Ascending aorta (tissue), 2 donors: ENCODE measurements at regions of chr9 and their contacts with region 1.

Region 1: DNA sequence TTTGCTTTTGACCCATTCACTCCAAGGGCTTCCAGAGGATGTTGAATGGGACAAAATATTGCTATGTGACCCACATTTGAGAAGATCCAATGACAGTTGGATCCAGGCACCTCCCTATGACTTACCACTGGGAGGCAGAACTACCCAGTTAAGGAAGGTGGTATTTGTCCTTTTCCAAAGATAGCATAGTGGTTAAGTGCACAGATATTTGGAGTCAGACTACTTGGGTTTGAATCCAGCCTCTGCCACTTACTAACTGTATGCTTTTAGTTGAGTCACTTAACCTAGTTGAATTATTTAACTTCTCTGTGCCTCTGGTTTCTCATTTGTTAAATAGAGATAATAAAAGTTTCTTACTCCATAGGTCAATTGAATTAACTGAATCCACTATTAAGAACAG is 74.5 kb upstream of the PALM2AKAP2 start:
- DNase-seq: no peak
- H3K4me3 ChIP-seq: no peak overlapping the region
- H3K27ac ChIP-seq: peak overlapping the region in 1 of 2 donors; percentile 55
- H3K4me1 ChIP-seq: peaks cover 15 to 27% of the 10 kb centered on the region in 2 donors
- H3K27me3 ChIP-seq: no peaks in the 10 kb centered on the region
- CTCF ChIP-seq: no peak

Region 2: DNA sequence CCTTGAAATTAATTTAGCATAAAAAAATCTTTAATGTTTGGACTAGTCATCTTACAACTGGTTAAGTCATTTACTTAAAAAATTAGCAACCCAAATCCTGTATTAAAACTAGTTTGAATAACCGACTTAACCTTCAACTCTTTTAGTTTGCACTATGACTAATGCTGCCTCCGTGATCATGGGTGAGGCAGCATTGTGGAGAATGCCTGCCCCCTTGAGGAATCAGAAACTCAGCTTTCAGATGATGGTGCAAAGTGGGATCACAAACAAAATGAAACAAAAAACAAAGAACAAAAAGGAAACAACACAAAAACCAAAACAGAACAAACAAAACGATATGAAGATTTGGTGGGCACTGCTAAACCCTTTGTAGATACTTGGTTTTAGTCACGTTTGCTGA is 52.6 kb before region 1 on chr9:
- intact Hi-C with region 1: loop called (anchors 5 kb)
- DNase-seq: no peak
- H3K4me3 ChIP-seq: no peak overlapping the region
- H3K27ac ChIP-seq: no peak overlapping the region
- H3K4me1 ChIP-seq: no peaks in the 10 kb centered on the region
- H3K27me3 ChIP-seq: no peaks in the 10 kb centered on the region
- CTCF ChIP-seq: peak; percentile 52 to 66 (median 53)

Region 3: GRCh38 chr9:109683521-109683920 is 22.0 kb before region 1 on chr9:
- intact Hi-C with region 1: no loop called
- DNase-seq: no peak
- H3K4me3 ChIP-seq: no peak overlapping the region
- H3K27ac ChIP-seq: no peak overlapping the region
- H3K4me1 ChIP-seq: no peaks in the 10 kb centered on the region
- H3K27me3 ChIP-seq: no peaks in the 10 kb centered on the region
- CTCF ChIP-seq: no peak

Region 4: GRCh38 chr9:109745335-109746283 is 40.1 kb after region 1 on chr9:
- intact Hi-C with region 1: loop called (anchors 2 kb)
- DNase-seq: peak; percentile 44 to 88
- H3K4me3 ChIP-seq: peak overlapping the region in 1 of 2 donors; percentile 24
- H3K27ac ChIP-seq: peak overlapping the region; percentile 76 to 86
- H3K4me1 ChIP-seq: peaks cover 15 to 31% of the 10 kb centered on the region in 2 donors
- H3K27me3 ChIP-seq: no peaks in the 10 kb centered on the region
- CTCF ChIP-seq: no peak

Region 5: GRCh38 chr9:109779711-109780452 is 74.4 kb after region 1 on chr9 and contains the start of gene PALM2AKAP2:
- intact Hi-C with region 1: loop called (anchors 1 kb)
- DNase-seq: peak in 1 of 2 donors; percentile 86
- H3K4me3 ChIP-seq: peak within 1 kb of the TSS; percentile 68 to 88
- H3K27ac ChIP-seq: peak within 1 kb of the TSS; percentile 86 to 88
- H3K4me1 ChIP-seq: peaks cover 3 to 12% of the 10 kb centered on the region in 2 donors
- H3K27me3 ChIP-seq: no peaks in the 10 kb centered on the region
- CTCF ChIP-seq: peak; percentile 6 to 62 (median 31)
- total RNA-seq, gene PALM2AKAP2: 38.2 TPM

Region 6: DNA sequence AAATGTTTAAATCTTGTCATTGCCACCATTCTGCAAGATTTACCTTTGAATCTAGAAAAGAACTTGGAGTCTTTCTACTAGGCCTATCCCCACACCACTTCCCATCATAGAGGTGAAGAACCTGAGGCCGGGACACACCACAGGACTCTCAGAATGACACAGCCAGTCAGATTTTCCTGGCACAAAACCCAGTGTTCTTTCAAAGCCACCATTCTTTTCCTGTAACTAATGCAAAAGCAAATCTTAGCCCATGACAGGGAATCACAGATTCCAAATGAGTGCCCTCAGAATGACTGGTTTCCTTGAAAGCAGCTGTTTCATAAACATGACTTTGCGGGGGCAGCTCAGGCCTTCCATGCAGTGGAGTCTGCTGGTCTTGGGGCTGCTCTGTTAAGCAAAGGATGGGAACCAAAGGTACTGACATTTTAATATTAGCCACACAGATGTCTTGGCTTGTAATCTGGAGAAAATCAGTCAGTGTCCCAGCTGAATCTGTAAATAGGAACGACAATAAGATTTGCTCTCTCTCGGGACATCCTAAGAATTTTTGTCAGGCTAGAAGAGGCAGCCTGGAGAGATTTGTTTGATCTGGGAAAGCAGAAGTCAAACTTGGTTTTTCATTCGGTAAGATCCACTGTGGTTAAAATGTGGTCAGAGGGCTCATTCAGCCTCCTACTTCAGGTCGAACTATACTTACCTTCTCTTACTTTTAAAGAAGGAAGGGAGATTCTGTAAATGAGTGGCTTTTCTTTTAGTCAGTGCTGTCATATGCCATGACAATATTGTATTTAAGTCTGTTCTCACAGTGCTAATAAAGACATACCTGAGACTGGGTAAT is 189.6 kb after region 1 on chr9:
- intact Hi-C with region 1: loop called (anchors 10 kb)
- DNase-seq: peak; percentile 29 to 85
- H3K4me3 ChIP-seq: no peak overlapping the region
- H3K27ac ChIP-seq: peak overlapping the region; percentile 41 to 71
- H3K4me1 ChIP-seq: peaks cover 0 to 3% of the 10 kb centered on the region in 2 donors
- H3K27me3 ChIP-seq: no peaks in the 10 kb centered on the region
- CTCF ChIP-seq: no peak

Region 7: DNA sequence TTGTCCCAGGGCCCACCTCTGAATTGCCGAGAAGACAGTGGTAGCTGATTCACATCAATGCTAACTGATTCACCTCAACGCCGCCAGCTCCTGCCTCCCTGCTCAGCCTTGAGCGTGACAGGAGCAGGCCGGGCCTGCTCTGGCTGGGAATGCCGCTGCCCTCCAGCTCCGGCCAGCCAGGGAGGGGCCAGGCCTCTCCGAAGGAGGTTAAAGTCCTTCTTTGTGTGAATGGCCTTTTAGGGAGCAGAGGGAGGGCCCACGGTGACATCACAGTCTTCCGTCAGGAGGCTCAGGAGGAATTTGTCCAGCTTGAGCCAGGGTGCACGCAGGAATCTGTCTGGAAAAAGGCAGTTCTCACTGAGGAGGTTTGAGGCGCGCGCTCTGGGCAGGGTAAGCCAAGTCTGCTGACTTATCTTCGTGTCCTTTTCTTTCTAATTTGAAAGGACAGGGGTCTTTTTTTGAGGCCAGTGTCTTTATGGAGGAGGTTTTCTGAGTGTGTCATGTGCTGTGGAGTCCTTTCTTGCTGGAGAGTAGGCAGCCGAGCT is 419.8 kb after region 1 on chr9:
- intact Hi-C with region 1: loop called (anchors 10 kb)
- DNase-seq: peak; percentile 76 to 97
- H3K4me3 ChIP-seq: peak overlapping the region in 1 of 2 donors; percentile 63
- H3K27ac ChIP-seq: peak overlapping the region; percentile 91 to 92
- H3K4me1 ChIP-seq: peaks cover 23 to 59% of the 10 kb centered on the region in 2 donors
- H3K27me3 ChIP-seq: no peaks in the 10 kb centered on the region
- CTCF ChIP-seq: no peak